ENCODE measurements at regions of chr6 and their contacts with region 1.

Region 1: DNA sequence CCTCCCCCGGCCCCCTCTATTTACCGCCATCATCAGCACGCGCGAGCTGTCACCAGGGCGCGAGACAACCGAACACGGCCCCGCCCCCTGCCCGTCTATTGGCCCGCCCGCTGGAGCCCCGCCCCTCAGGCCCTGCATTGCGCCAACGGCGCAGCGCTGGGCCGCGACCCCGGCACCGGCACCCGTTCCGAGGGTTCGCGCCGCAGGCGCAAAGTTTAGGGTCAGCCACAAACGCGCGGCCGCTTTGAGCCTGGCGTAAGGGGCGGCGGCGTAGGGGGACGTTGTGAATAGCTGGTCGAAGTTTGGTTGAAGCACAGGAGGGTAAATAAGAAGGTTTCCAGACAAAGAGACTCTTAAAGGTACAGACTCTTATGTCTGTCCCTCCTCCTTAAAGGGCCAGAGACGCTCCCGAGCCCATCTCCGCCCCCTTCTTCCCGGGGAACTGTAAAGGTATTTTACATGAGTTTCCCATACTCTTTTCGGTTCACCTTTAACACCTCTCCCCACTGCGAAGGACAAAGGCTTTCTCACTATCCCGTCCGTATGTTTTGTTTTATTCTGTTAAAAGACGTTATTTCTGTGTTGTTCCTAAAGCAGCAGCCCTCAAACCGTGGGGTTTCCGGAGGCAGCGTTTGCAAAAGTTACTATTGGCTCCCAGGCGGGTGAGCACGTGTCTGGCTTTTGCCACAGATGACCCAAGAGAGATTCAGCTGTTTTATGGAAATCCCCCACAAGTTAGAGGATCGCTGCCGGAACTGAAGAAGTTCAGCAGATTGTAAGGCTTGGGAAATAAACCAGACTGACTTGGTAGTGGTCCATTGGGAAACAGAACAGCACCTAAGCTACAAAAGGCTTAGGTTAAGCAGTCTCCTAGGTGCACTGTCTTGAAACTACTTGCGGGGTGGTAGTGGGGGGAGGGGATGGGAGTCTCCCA is at the start of gene USP49:
- DNase-seq: peak; percentile 79 to 85
- H3K4me3 ChIP-seq: peak within 1 kb of the TSS; percentile 69
- H3K27ac ChIP-seq: peak within 1 kb of the TSS; percentile 79
- H3K4me1 ChIP-seq: peaks cover 16% of the 10 kb centered on the region
- H3K27me3 ChIP-seq: no peaks in the 10 kb centered on the region
- CTCF ChIP-seq: no peak
- total RNA-seq, gene USP49: 10.9 and 13.9 TPM in 2 replicates

Region 2: GRCh38 chr6:41818271-41819054 is 77.1 kb before region 1 on chr6:
- CTCF ChIA-PET with region 1: interaction called, 13 read pairs
- POLR2A ChIA-PET with region 1: no interaction called
- intact Hi-C with region 1: no loop called
- DNase-seq: no peak
- H3K4me3 ChIP-seq: no peak overlapping the region
- H3K27ac ChIP-seq: no peak overlapping the region
- H3K4me1 ChIP-seq: no peaks in the 10 kb centered on the region
- H3K27me3 ChIP-seq: no peaks in the 10 kb centered on the region
- CTCF ChIP-seq: no peak

Region 3: DNA sequence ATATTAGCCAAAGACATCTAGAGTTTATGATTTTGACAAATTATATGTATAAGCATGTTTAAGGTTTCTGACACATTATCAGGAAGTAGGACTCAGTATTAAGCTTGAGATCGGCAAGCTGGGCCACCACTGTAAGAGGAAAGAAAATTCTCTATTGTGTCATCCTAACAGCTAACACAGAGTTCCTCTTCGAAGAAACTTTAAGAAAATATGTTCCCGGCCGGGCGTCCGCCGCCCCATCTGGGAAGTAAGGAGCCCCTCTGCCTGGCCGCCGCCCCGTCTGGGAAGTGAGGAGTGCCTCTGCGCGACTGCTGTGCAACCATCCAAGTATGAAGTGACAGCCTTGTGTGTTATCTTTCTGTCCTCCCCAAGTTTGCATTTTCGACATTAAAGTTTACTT is 23.4 kb before region 1 on chr6:
- CTCF ChIA-PET with region 1: no interaction called
- POLR2A ChIA-PET with region 1: no interaction called
- intact Hi-C with region 1: no loop called
- DNase-seq: no peak
- H3K4me3 ChIP-seq: no peak overlapping the region
- H3K27ac ChIP-seq: no peak overlapping the region
- H3K4me1 ChIP-seq: no peaks in the 10 kb centered on the region
- H3K27me3 ChIP-seq: no peaks in the 10 kb centered on the region
- CTCF ChIP-seq: no peak

Measured in PC-9 (cell line).